ENCODE measurements at regions of chr10 and their contacts with region 1.

Region 1: GRCh38 chr10:22611425-22612115 is 102.8 kb downstream of the PIP4K2A start:
- DNase-seq: peak; percentile 73
- ATAC-seq: peak; percentile 87
- H3K4me3 Mint-ChIP-seq: peak overlapping the region; percentile 65
- H3K27ac Mint-ChIP-seq: peak overlapping the region; percentile 76
- H3K4me1 Mint-ChIP-seq: peaks cover 92% of the 10 kb centered on the region
- H3K27me3 Mint-ChIP-seq: no peaks in the 10 kb centered on the region

Region 2: GRCh38 chr10:22369434-22370072 is 242.0 kb before region 1 on chr10:
- CTCF ChIA-PET with region 1: no interaction called
- POLR2A ChIA-PET with region 1: no interaction called
- intact Hi-C with region 1: no loop called
- DNase-seq: no peak
- ATAC-seq: peak; percentile 69
- H3K4me3 Mint-ChIP-seq: no peak overlapping the region
- H3K27ac Mint-ChIP-seq: no peak overlapping the region
- H3K4me1 Mint-ChIP-seq: peaks cover 37% of the 10 kb centered on the region
- H3K27me3 Mint-ChIP-seq: peaks cover 2% of the 10 kb centered on the region

Region 3: DNA sequence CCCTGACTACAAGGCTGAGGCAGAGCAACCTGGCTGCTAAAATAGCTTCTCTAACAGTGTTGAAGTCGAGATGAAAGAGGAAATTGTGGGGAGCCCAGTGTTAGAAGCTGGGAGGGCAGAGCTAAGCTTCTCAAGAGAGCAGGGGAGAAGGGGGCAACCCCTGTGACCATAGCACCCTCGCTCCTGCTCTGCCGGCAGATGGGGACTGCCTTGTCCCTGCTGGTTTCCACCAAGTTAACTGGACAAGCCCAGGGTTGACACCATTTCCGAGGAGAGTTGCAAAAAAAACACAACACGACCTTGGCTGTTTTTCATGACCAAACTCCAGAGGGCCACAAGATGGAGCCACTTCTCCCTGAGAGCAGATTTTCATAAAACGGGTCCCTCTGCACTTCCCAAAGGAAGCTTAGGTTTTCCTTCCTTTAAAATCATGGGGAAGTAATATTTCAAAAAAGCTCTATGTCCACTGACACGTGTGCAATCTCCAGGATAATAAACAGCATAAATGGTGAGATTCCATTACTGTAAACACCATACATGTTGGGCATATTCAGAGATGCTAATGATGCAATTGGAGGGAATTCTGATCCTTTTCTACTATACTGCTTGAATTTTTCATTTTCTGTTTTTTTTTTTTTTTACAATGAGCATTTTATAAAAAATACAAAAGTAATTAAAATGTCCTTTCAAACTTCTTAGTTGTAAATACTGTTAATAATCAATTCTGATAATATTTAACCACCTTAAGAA is 37.6 kb before region 1 on chr10:
- CTCF ChIA-PET with region 1: interaction called, 12 read pairs
- POLR2A ChIA-PET with region 1: no interaction called
- intact Hi-C with region 1: no loop called
- DNase-seq: peak; percentile 37
- ATAC-seq: no peak
- H3K4me3 Mint-ChIP-seq: no peak overlapping the region
- H3K27ac Mint-ChIP-seq: no peak overlapping the region
- H3K4me1 Mint-ChIP-seq: peaks cover 46% of the 10 kb centered on the region
- H3K27me3 Mint-ChIP-seq: no peaks in the 10 kb centered on the region

Region 4: GRCh38 chr10:22648547-22648961 is 37.0 kb after region 1 on chr10:
- CTCF ChIA-PET with region 1: interaction called, 4 read pairs
- POLR2A ChIA-PET with region 1: interaction called, 3 read pairs
- intact Hi-C with region 1: loop called (anchors 2 to 5 kb)
- DNase-seq: no peak
- ATAC-seq: peak; percentile 8
- H3K4me3 Mint-ChIP-seq: peak overlapping the region; percentile 49
- H3K27ac Mint-ChIP-seq: peak overlapping the region; percentile 93
- H3K4me1 Mint-ChIP-seq: peaks cover 90% of the 10 kb centered on the region
- H3K27me3 Mint-ChIP-seq: no peaks in the 10 kb centered on the region

Region 5: DNA sequence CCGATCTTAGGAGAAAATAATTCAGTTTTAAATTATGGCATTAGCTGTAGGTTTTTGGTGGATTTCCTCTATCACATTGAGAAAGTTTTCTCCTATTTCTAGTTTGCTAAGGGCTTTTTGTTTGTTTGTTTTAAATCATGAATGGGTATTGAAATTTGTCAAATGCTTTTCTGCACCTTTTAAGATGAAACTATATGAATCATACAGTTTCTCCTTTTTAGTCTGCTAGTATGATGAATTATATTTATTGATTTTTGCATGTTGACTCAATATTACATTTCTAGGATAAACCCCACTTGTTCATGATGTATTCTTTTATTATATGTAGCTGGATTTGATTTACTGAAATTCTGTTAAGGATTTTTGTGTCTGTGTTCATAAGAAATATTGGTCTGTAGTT is 173.1 kb after region 1 on chr10:
- CTCF ChIA-PET with region 1: no interaction called
- POLR2A ChIA-PET with region 1: no interaction called
- intact Hi-C with region 1: no loop called
- DNase-seq: no peak
- ATAC-seq: peak; percentile 19
- H3K4me3 Mint-ChIP-seq: no peak overlapping the region
- H3K27ac Mint-ChIP-seq: no peak overlapping the region
- H3K4me1 Mint-ChIP-seq: peaks cover 2% of the 10 kb centered on the region
- H3K27me3 Mint-ChIP-seq: no peaks in the 10 kb centered on the region

Region 6: DNA sequence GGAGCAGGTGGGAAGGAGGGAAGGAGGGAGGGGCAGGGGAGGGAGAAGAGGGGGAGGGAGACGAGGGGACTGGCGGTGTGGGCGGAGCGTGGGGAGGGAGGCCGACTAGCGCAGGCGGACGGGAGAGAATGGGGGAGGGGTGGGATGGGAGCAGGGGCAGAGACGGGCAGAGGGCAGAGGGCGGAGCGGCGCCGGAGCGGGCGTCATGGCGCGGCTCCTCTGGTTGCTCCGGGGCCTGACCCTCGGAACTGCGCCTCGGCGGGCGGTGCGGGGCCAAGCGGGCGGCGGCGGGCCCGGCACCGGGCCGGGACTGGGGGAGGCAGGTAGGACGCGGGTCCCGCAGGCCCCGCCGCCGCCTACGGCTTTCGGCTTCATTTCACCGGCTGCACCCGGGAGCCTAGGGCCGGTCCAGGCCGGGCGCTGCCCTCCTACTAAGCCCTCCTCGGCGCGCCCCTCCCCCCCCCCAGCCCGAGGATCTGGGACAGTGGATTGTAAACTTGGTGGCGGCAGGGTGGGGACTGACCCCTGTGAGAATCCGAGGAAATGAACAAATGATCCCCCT is 483.9 kb after region 1 on chr10 and contains the start of gene MSRB2:
- CTCF ChIA-PET with region 1: no interaction called
- POLR2A ChIA-PET with region 1: no interaction called
- intact Hi-C with region 1: loop called in 1 of 2 experiments (anchors 5 kb)
- DNase-seq: peak; percentile 84
- ATAC-seq: peak; percentile 58
- H3K4me3 Mint-ChIP-seq: peak within 1 kb of the TSS; percentile 95
- H3K27ac Mint-ChIP-seq: peak within 1 kb of the TSS; percentile 92
- H3K4me1 Mint-ChIP-seq: peaks cover 39% of the 10 kb centered on the region
- H3K27me3 Mint-ChIP-seq: no peaks in the 10 kb centered on the region
- total RNA-seq, gene MSRB2: 8.2 to 9.0 TPM

Measured in activated CD4-positive, alpha-beta T cell treated with anti-CD3 and anti-CD28 coated beads for 36 hours (primary cell).